BJ (cell line): ENCODE measurements at regions of chr2 and their contacts with region 1.

Region 1: GRCh38 chr2:164430166-164430783 is 191.0 kb downstream of the GRB14 start:
- DNase-seq: no peak
- H3K4me3 ChIP-seq: no peak overlapping the region
- H3K27me3 ChIP-seq: no peaks in the 10 kb centered on the region
- CTCF ChIP-seq: peak; percentile 75

Region 2: DNA sequence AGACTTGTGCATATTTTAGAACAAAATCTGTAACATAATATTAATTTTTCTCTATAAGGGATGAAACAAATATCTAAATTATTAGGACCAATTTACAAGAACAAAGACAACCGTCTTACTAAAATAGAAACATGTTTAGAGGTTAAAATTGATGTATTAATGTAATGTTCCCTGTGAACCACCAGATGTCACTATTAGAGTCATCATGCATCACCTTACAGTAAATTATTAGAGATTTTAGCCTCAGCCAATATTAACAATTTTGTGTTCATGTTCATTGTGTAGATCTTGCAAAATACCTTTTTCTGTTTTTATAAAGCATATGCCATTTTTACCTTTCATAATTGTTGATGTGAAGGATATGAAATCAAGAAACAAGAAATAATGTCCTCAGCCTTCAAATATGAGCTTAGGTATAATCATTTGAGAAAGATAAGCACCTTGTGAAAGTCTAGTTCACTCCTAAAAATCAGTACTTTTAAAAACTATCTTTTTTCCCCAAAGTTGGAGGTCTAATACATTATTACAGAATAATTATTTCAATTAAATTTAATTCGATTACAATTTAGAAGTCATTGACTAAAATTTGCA is 1247.4 kb before region 1 on chr2:
- CTCF ChIA-PET with region 1: interaction called, 10 read pairs
- POLR2A ChIA-PET with region 1: no interaction called
- DNase-seq: no peak
- H3K4me3 ChIP-seq: no peak overlapping the region
- H3K27me3 ChIP-seq: no peaks in the 10 kb centered on the region
- CTCF ChIP-seq: peak; percentile 57

Region 3: GRCh38 chr2:163417596-163418337 is 1012.5 kb before region 1 on chr2:
- CTCF ChIA-PET with region 1: no interaction called
- POLR2A ChIA-PET with region 1: interaction called, 15 read pairs
- DNase-seq: no peak
- H3K4me3 ChIP-seq: no peak overlapping the region
- H3K27me3 ChIP-seq: no peaks in the 10 kb centered on the region
- CTCF ChIP-seq: no peak

Region 4: DNA sequence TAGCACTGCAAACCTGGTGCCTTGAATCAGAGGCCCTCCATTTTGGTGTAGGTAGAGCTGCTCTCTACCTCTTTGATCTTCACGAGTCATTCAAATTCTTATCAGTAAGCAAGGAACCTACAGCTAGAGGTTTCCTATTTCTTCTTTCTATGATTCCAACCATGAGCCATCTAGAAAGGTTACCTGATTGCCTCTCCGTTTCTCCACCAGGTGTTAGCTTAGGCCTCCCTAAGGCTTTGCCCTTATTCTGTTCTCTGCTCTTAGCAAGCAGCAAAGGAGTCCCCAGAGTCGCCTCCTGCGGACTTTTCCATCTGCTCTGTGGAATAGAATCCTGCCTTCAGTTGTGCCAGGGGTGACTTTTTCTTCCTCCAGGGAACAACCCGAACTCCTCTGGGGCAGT is 17.4 kb after region 1 on chr2:
- CTCF ChIA-PET with region 1: no interaction called
- POLR2A ChIA-PET with region 1: no interaction called
- DNase-seq: no peak
- H3K4me3 ChIP-seq: no peak overlapping the region
- H3K27me3 ChIP-seq: no peaks in the 10 kb centered on the region
- CTCF ChIP-seq: no peak

Region 5: DNA sequence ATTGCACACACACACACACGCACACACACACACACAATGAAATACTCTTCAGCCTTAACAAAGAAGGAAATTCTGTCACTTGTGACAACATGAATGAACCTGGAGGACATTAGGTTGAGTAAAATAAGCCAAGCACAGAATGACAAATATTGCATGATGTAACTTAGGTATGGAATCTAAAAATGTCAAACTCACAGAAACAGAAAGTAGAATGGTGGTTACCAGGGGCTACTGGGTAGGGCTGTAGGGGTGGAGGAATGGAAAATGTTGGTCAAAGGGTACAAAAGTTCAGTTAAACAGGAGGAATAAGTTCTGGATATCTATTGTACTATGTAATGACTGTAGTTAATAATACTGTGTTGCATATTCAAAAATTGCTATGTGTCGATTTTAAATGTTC is 838.5 kb after region 1 on chr2:
- CTCF ChIA-PET with region 1: no interaction called
- POLR2A ChIA-PET with region 1: no interaction called
- DNase-seq: no peak
- H3K4me3 ChIP-seq: no peak overlapping the region
- H3K27me3 ChIP-seq: no peaks in the 10 kb centered on the region
- CTCF ChIP-seq: no peak